ENCODE measurements at regions of chr6 and their contacts with region 1.

Region 1: GRCh38 chr6:13328076-13328874 is at the start of gene TBC1D7:
- DNase-seq: peak; percentile 92
- H3K4me3 Mint-ChIP-seq: peak within 1 kb of the TSS; percentile 77
- H3K27ac Mint-ChIP-seq: peak within 1 kb of the TSS; percentile 71
- H3K4me1 Mint-ChIP-seq: no peaks in the 10 kb centered on the region
- H3K27me3 Mint-ChIP-seq: no peaks in the 10 kb centered on the region
- CTCF ChIP-seq: no peak
- total RNA-seq, gene TBC1D7: 12.6 and 13.2 TPM in 2 replicates

Region 2: GRCh38 chr6:12911387-12911960 is 416.8 kb before region 1 on chr6:
- CTCF ChIA-PET with region 1: no interaction called
- intact Hi-C with region 1: loop called (anchors 5 kb)
- DNase-seq: no peak
- H3K4me3 Mint-ChIP-seq: no peak overlapping the region
- H3K27ac Mint-ChIP-seq: no peak overlapping the region
- H3K4me1 Mint-ChIP-seq: no peaks in the 10 kb centered on the region
- H3K27me3 Mint-ChIP-seq: peaks cover 81% of the 10 kb centered on the region
- CTCF ChIP-seq: peak; percentile 14

Region 3: DNA sequence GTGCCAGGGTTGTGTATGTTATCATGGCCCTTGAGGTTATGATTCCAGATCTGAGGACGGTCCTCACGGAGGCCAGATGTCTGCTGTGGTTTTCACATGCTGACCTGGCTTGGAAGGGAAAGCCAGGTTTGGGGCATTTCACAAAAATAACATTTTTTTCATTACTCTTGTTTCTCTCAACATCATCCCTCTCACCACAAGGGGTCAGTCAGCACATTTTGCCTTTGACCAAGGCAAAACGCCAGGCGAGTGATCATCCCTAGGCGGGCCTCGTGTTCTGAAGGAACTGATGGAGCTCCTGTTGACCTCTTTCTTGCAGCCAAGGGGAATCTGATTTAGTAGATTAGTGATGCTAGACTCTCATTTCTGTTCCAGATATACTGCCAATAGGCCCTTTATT is 133.4 kb before region 1 on chr6:
- CTCF ChIA-PET with region 1: interaction called, 6 read pairs
- intact Hi-C with region 1: loop called (anchors 2 kb)
- DNase-seq: peak; percentile 43
- H3K4me3 Mint-ChIP-seq: no peak overlapping the region
- H3K27ac Mint-ChIP-seq: no peak overlapping the region
- H3K4me1 Mint-ChIP-seq: no peaks in the 10 kb centered on the region
- H3K27me3 Mint-ChIP-seq: peaks cover 39% of the 10 kb centered on the region
- CTCF ChIP-seq: peak; percentile 30

Region 4: GRCh38 chr6:13427801-13428582 is 99.7 kb after region 1 on chr6:
- CTCF ChIA-PET with region 1: no interaction called
- intact Hi-C with region 1: no loop called
- DNase-seq: no peak
- H3K4me3 Mint-ChIP-seq: no peak overlapping the region
- H3K27ac Mint-ChIP-seq: no peak overlapping the region
- H3K4me1 Mint-ChIP-seq: peaks cover 17% of the 10 kb centered on the region
- H3K27me3 Mint-ChIP-seq: no peaks in the 10 kb centered on the region
- CTCF ChIP-seq: no peak

Region 5: DNA sequence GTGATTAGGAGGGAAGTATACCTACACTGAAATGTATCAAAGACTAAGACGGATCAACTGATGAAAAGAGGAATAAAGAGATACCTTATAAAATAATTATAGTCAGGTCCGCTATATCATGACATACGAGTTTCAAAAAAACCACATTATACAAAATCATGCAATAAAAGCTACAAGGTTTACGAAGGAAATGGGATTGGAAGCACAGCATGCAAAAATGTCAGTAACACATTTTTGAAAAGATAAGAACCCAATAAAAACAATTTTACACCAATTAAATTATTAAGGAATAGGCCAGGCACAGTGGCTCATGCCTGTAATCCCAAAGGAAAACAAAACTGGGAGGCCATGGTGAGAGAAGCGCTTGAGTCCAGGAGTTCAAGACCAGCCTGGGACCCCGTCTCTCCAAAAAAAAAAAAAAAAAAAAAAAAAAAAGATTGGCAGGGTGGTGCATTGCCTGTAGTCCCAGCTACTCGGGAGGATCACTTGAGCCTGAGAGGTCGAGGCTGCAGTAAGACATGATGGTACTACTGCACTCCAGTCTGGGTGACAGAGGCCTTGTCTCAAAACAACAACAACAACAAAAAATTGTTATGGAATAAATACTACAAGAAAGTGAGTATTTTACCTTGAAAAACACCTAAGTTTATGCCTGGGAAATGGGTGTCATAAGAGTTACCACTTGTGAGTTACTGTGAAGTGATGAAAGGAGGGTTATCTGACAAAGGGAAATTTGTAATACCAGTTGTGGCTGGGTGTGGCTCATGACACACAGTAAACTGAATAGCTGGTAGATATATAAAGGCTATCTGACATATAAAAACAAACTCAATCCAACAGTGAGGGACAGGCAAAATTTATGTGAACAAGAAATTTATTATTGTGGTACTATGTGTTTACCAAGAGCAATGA is 338.2 kb after region 1 on chr6:
- CTCF ChIA-PET with region 1: no interaction called
- intact Hi-C with region 1: no loop called
- DNase-seq: no peak
- H3K4me3 Mint-ChIP-seq: no peak overlapping the region
- H3K27ac Mint-ChIP-seq: no peak overlapping the region
- H3K4me1 Mint-ChIP-seq: peaks cover 8% of the 10 kb centered on the region
- H3K27me3 Mint-ChIP-seq: no peaks in the 10 kb centered on the region
- CTCF ChIP-seq: no peak

Region 6: GRCh38 chr6:14046476-14047068 is 718.3 kb after region 1 on chr6:
- CTCF ChIA-PET with region 1: no interaction called
- intact Hi-C with region 1: no loop called
- DNase-seq: peak; percentile 39
- H3K4me3 Mint-ChIP-seq: no peak overlapping the region
- H3K27ac Mint-ChIP-seq: no peak overlapping the region
- H3K4me1 Mint-ChIP-seq: no peaks in the 10 kb centered on the region
- H3K27me3 Mint-ChIP-seq: peaks cover 30% of the 10 kb centered on the region
- CTCF ChIP-seq: no peak

Measured in Calu3 (cell line).